ENCODE measurements at regions of chr3 and their contacts with region 1.

Region 1: GRCh38 chr3:9946112-9947024 is 5.8 kb downstream of the PRRT3 start:
- DNase-seq: peak; percentile 94
- H3K4me3 ChIP-seq: peak overlapping the region; percentile 27 to 60 (median 34)
- H3K27ac ChIP-seq: no peak overlapping the region
- H3K4me1 ChIP-seq: peaks cover 3% of the 10 kb centered on the region
- H3K27me3 ChIP-seq: no peaks in the 10 kb centered on the region
- CTCF ChIP-seq: peak; percentile 83 to 85
- POLR2A ChIP-seq: peak; percentile 82

Region 2: DNA sequence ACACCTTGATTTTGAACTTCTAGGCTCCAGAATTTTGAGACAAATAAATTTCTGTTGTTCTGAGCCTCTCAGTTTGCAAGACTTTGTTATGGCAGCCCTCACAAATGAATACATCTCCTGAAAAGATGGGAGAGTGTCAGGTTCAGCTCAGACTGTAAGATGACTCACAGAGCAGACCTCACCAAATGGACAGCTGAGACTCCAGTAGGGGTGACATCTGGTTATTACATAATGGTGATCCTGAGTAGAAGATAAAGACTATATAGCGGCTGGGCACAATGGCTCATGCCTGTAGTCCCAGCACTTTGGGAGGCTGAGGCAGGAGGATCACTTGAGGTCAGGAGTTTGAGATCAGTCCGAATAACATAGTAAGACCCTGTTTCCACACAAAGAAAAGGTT is 323.2 kb before region 1 on chr3:
- CTCF ChIA-PET with region 1: no interaction called
- POLR2A ChIA-PET with region 1: no interaction called
- dilution Hi-C with region 1: no loop called
- intact Hi-C with region 1: no loop called
- DNase-seq: no peak
- H3K4me3 ChIP-seq: no peak overlapping the region
- H3K27ac ChIP-seq: no peak overlapping the region
- H3K4me1 ChIP-seq: no peaks in the 10 kb centered on the region
- H3K27me3 ChIP-seq: no peaks in the 10 kb centered on the region
- CTCF ChIP-seq: no peak
- POLR2A ChIP-seq: no peak

Region 3: GRCh38 chr3:9715764-9716437 is 230.5 kb before region 1 on chr3:
- CTCF ChIA-PET with region 1: interaction called, 21 read pairs
- POLR2A ChIA-PET with region 1: no interaction called
- dilution Hi-C with region 1: no loop called
- intact Hi-C with region 1: loop called (anchors 1 kb)
- DNase-seq: peak; percentile 89
- H3K4me3 ChIP-seq: no peak overlapping the region
- H3K27ac ChIP-seq: no peak overlapping the region
- H3K4me1 ChIP-seq: no peaks in the 10 kb centered on the region
- H3K27me3 ChIP-seq: peaks cover 3 to 5% of the 10 kb centered on the region in 2 experiments
- CTCF ChIP-seq: peak; percentile 75 to 77
- POLR2A ChIP-seq: no peak

Region 4: GRCh38 chr3:9837701-9838582 is 108.4 kb before region 1 on chr3:
- CTCF ChIA-PET with region 1: interaction called, 35 read pairs
- POLR2A ChIA-PET with region 1: no interaction called
- dilution Hi-C with region 1: no loop called
- intact Hi-C with region 1: loop called (anchors 1 kb)
- DNase-seq: peak; percentile 80
- H3K4me3 ChIP-seq: no peak overlapping the region
- H3K27ac ChIP-seq: peak overlapping the region; percentile 53
- H3K4me1 ChIP-seq: peaks cover 19% of the 10 kb centered on the region
- H3K27me3 ChIP-seq: no peaks in the 10 kb centered on the region
- CTCF ChIP-seq: no peak
- POLR2A ChIP-seq: peak; percentile 70

Region 5: GRCh38 chr3:9897408-9898372 is 48.7 kb before region 1 on chr3:
- CTCF ChIA-PET with region 1: interaction called, 11 read pairs
- POLR2A ChIA-PET with region 1: no interaction called
- dilution Hi-C with region 1: no loop called
- intact Hi-C with region 1: no loop called
- DNase-seq: peak; percentile 75
- H3K4me3 ChIP-seq: no peak overlapping the region
- H3K27ac ChIP-seq: no peak overlapping the region
- H3K4me1 ChIP-seq: peaks cover 42% of the 10 kb centered on the region
- H3K27me3 ChIP-seq: no peaks in the 10 kb centered on the region
- CTCF ChIP-seq: no peak
- POLR2A ChIP-seq: peak; percentile 29

Region 6: GRCh38 chr3:9969632-9970019 is 23.3 kb after region 1 on chr3:
- CTCF ChIA-PET with region 1: interaction called, 14 read pairs
- POLR2A ChIA-PET with region 1: no interaction called
- dilution Hi-C with region 1: no loop called
- intact Hi-C with region 1: no loop called
- DNase-seq: no peak
- H3K4me3 ChIP-seq: no peak overlapping the region
- H3K27ac ChIP-seq: no peak overlapping the region
- H3K4me1 ChIP-seq: peaks cover 16% of the 10 kb centered on the region
- H3K27me3 ChIP-seq: no peaks in the 10 kb centered on the region
- CTCF ChIP-seq: no peak
- POLR2A ChIP-seq: no peak

Region 7: GRCh38 chr3:10026084-10026890 is 79.9 kb after region 1 on chr3 and contains the start of gene FANCD2:
- CTCF ChIA-PET with region 1: interaction called, 10 read pairs
- POLR2A ChIA-PET with region 1: no interaction called
- dilution Hi-C with region 1: no loop called
- intact Hi-C with region 1: no loop called
- DNase-seq: peak; percentile 92
- H3K4me3 ChIP-seq: peak within 1 kb of the TSS; percentile 55 to 84 (median 81)
- H3K27ac ChIP-seq: peak within 1 kb of the TSS; percentile 88
- H3K4me1 ChIP-seq: peaks cover 13% of the 10 kb centered on the region
- H3K27me3 ChIP-seq: no peaks in the 10 kb centered on the region
- CTCF ChIP-seq: no peak
- POLR2A ChIP-seq: peak; percentile 79
- total RNA-seq, gene FANCD2: 23.4 and 26.8 TPM in 2 replicates

Measured in endothelial cell of umbilical vein (primary cell).